Psoas muscle (tissue), 8 donors: ENCODE measurements at regions of chr5 and their contacts with region 1.

Region 1: GRCh38 chr5:150436141-150436680 is 13.3 kb downstream of the RPS14 start:
- DNase-seq: peak; percentile 83 to 89
- ATAC-seq: peak; percentile 89 to 97 (median 94)
- H3K4me3 ChIP-seq: no peak overlapping the region
- H3K27ac ChIP-seq: no peak overlapping the region
- H3K4me1 ChIP-seq: no peaks in the 10 kb centered on the region
- H3K27me3 ChIP-seq: no peaks in the 10 kb centered on the region
- CTCF ChIP-seq: peak; percentile 96

Region 2: DNA sequence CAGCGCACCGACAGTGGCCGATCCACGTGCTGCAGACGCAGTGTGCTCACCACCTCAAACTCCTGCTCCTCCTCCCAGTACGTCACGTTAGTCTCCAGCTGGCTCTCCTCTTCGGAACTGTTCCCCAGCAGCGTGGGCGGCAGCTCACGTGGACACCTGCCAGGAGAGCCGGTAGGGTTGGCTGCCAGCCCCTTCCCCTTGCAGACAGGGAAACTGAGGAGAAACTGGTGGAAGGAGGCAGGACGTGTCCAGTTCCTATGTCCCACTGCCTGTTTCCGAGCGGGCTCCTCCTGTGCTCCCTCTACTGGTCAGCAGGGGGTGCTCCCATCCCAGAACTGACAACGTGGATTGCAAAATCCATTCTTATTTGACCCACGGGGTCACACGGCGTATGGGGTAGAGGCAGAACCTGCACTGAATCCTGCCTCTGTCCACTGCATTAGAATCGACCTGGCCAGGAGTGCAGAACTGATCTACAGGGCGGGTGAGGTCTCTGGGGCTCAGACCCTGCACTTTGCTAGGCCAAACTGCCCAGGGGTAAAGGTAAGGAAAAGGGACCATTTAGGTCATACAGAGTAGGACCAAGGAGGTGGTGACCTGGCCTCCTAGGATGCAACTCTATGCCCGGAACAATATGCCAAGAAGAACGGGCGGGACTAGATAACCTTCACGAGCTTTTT is 306.3 kb before region 1 on chr5:
- intact Hi-C with region 1: loop called in 1 of 2 experiments (anchors 2 kb)
- DNase-seq: peak; percentile 76 to 86
- ATAC-seq: peak; percentile 85 to 92 (median 89)
- H3K4me3 ChIP-seq: peak overlapping the region; percentile 39
- H3K27ac ChIP-seq: no peak overlapping the region
- H3K4me1 ChIP-seq: no peaks in the 10 kb centered on the region
- H3K27me3 ChIP-seq: no peaks in the 10 kb centered on the region
- CTCF ChIP-seq: peak; percentile 91

Region 3: GRCh38 chr5:150272526-150272925 is 163.7 kb before region 1 on chr5:
- intact Hi-C with region 1: loop called in 1 of 2 experiments (anchors 10 kb)
- DNase-seq: no peak
- ATAC-seq: no peak
- H3K4me3 ChIP-seq: no peak overlapping the region
- H3K27ac ChIP-seq: no peak overlapping the region
- H3K4me1 ChIP-seq: peaks cover 9% of the 10 kb centered on the region
- H3K27me3 ChIP-seq: no peaks in the 10 kb centered on the region
- CTCF ChIP-seq: peak; percentile 16

Region 4: GRCh38 chr5:150357326-150358260 is 78.6 kb before region 1 on chr5 and contains the start of gene TCOF1:
- intact Hi-C with region 1: loop called in 1 of 2 experiments (anchors 2 kb)
- DNase-seq: peak; percentile 98
- ATAC-seq: peak; percentile 99 to 100 (median 99)
- H3K4me3 ChIP-seq: peak within 1 kb of the TSS; percentile 85
- H3K27ac ChIP-seq: peak within 1 kb of the TSS; percentile 78
- H3K4me1 ChIP-seq: peaks cover 8% of the 10 kb centered on the region
- H3K27me3 ChIP-seq: no peaks in the 10 kb centered on the region
- CTCF ChIP-seq: no peak
- total RNA-seq, gene TCOF1: 22.8 to 26.7 (median 23.6) TPM

Region 5: DNA sequence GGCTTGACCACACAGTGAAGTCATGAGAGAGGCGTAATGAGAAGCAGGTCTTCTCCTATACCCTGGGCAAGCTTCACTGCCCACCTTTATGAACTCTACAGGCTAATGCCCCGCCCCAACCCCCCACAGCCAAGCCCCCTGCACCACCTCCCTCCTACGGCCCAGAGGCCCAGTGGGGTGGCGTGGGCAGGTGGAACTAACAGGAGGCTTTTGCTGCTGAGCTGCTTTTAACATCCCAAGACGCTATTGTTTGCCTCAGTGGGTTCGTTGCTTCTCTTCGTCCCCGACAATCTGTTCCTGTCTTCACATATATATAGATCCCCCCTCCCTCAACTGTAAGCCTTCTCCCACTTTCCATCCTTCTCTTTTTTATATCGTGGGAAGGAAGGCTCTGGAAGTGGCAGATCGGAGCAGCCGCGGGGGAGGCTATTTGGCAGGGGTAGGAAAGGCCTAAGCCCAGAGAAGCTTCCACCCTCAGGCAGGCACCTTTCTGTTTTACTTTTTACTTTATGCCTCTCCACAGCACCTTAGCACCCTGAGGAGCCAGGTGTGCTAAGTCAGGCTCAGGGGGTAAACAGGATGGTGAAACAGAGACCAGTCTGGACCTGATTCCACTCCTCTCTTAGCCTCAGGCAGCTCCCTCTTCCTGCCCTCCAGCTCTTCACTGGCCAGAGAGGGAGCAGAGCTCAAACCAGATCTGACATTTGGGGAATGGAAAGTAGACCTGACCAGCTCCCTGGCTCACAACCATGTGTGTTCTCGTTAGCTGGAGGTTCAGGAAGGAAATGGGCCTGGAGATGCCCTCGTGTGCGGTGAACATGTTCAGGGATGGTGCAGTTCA is 50.0 kb before region 1 on chr5:
- intact Hi-C with region 1: no loop called
- DNase-seq: no peak
- ATAC-seq: no peak
- H3K4me3 ChIP-seq: no peak overlapping the region
- H3K27ac ChIP-seq: no peak overlapping the region
- H3K4me1 ChIP-seq: no peaks in the 10 kb centered on the region
- H3K27me3 ChIP-seq: no peaks in the 10 kb centered on the region
- CTCF ChIP-seq: no peak

Region 6: GRCh38 chr5:150398722-150399523 is 37.3 kb before region 1 on chr5:
- intact Hi-C with region 1: loop called in 1 of 2 experiments (anchors 5 kb)
- DNase-seq: no peak
- ATAC-seq: peak in 2 of 4 donors; percentile 25 to 32
- H3K4me3 ChIP-seq: no peak overlapping the region
- H3K27ac ChIP-seq: no peak overlapping the region
- H3K4me1 ChIP-seq: no peaks in the 10 kb centered on the region
- H3K27me3 ChIP-seq: no peaks in the 10 kb centered on the region
- CTCF ChIP-seq: peak; percentile 20

Region 7: DNA sequence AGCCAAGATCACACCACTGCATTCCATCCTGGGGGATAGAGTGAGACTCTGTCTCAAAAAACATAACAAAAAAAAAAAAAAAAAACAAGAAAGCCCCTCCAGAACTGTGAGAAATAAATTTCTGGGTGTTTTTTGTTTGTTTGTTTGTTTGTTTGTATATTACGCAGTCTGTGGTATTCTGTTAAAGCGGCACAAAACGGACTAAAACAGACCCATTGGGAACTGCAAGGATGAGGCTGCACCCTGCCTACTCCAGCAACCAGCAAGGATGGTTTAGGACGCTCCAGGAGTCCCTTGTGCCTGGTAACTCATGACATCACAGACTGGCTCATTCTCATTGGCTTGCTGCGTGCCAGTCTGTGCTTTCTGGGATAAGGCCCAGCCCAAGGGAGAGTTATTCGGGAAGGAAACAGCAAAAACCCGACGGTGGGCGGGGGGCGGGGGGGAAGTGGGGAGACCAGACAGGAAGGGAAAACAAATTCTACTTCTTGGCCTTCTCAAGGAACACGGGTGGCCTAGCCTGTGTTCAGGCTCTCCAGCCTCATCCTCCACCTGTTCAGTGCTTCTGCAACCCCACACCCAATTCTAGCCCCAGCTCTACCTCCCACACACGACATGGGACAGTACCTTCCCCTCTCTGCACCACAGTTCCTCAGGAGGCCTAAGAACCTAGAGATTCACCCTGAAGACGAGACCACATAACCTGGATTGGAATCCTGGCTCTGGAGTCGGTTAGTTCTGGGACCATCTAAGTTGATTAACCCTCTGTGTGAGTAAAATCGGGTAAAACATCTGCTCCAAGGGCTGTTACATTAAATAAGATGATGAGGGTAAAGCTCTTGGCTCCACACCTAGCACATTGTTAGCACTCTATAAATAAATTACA is 26.3 kb before region 1 on chr5:
- intact Hi-C with region 1: loop called in 1 of 2 experiments (anchors 2 kb)
- DNase-seq: peak; percentile 61 to 77
- ATAC-seq: peak; percentile 90 to 94 (median 92)
- H3K4me3 ChIP-seq: peak overlapping the region; percentile 63
- H3K27ac ChIP-seq: peak overlapping the region; percentile 67
- H3K4me1 ChIP-seq: peaks cover 5% of the 10 kb centered on the region
- H3K27me3 ChIP-seq: no peaks in the 10 kb centered on the region
- CTCF ChIP-seq: no peak